ENCODE measurements at regions of chr12 and their contacts with region 1.

Region 1: DNA sequence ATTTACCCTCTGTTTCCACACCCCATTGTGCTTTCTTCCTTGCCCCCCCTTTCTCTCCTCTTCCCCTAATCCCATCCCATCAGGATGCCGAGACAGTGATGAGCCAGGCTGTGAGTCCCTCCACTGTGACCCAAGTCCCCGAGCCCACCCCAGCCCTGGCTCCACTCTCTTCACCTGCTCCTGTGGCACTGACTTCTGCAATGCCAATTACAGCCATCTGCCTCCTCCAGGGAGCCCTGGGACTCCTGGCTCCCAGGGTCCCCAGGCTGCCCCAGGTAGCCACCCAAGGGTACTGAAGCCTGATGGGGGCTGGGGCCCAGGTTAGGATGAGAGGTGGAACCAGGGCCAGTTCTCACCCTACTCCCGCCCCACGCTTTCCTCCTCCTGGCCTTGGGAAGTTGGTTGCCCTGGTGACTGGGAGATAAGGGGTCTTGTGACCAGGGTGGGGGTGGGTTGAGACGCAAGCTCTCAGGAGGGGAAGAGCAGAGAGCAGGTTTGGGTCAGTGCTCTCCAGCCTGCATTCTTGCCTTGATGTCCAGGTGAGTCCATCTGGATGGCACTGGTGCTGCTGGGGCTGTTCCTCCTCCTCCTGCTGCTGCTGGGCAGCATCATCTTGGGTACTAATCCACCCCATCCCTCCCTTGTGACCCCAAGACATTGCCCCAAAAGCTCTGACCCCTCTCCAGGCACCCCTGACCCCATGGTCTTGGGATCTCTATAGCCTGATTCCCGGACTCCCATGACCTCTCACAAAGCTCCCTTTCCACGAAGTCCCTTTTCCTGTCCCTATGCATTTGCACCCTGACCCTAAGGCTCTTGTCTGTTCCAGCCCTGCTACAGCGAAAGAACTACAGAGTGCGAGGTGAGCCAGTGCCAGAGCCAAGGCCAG is 1.2 kb downstream of the AMHR2 start:
- DNase-seq: no peak
- H3K27ac ChIP-seq: no peak overlapping the region
- CTCF ChIP-seq: no peak

Region 2: GRCh38 chr12:52813885-52814711 is 610.8 kb before region 1 on chr12 and contains the start of gene KRT4:
- CTCF ChIA-PET with region 1: no interaction called
- POLR2A ChIA-PET with region 1: no interaction called
- DNase-seq: no peak
- H3K27ac ChIP-seq: no peak within 1 kb of the TSS
- CTCF ChIP-seq: no peak

Region 3: GRCh38 chr12:53295070-53295890 is 129.6 kb before region 1 on chr12 and contains the start of gene PFDN5:
- CTCF ChIA-PET with region 1: no interaction called
- POLR2A ChIA-PET with region 1: no interaction called
- DNase-seq: peak; percentile 83
- H3K27ac ChIP-seq: peak within 1 kb of the TSS; percentile 81
- CTCF ChIP-seq: no peak

Region 4: GRCh38 chr12:53380104-53380793 is 44.6 kb before region 1 on chr12 and contains the start of gene SP1:
- CTCF ChIA-PET with region 1: interaction called, 11 read pairs
- POLR2A ChIA-PET with region 1: interaction called, 4 read pairs
- DNase-seq: peak; percentile 87
- H3K27ac ChIP-seq: peak within 1 kb of the TSS; percentile 97
- CTCF ChIP-seq: no peak